ENCODE measurements at regions of chr19 and their contacts with region 1.

Region 1: GRCh38 chr19:48646001-48646721 is at the start of gene CA11:
- DNase-seq: peak; percentile 89 to 95
- H3K4me3 ChIP-seq: peak within 1 kb of the TSS; percentile 68 to 84 (median 82)
- H3K27ac ChIP-seq: peak within 1 kb of the TSS; percentile 78
- H3K4me1 ChIP-seq: peaks cover 0 to 7% (median 1%) of the 10 kb centered on the region in 4 experiments; a peak in 4 of 7 replicates
- H3K27me3 ChIP-seq: no peaks in the 10 kb centered on the region
- CTCF ChIP-seq: peak; percentile 81 to 96 (median 88)
- EP300 ChIP-seq: peak in 1 of 2 experiments; percentile 52; a peak in 1 of 3 replicates
- POLR2A ChIP-seq: 0 out of 3 replicates have a peak, but pooled peaks of 1 of the 2 experiments have one; percentile 22
- RAD21 ChIP-seq: peak; percentile 91 to 96
- total RNA-seq, gene CA11: 51.7 and 53.0 TPM in 2 replicates

Region 2: DNA sequence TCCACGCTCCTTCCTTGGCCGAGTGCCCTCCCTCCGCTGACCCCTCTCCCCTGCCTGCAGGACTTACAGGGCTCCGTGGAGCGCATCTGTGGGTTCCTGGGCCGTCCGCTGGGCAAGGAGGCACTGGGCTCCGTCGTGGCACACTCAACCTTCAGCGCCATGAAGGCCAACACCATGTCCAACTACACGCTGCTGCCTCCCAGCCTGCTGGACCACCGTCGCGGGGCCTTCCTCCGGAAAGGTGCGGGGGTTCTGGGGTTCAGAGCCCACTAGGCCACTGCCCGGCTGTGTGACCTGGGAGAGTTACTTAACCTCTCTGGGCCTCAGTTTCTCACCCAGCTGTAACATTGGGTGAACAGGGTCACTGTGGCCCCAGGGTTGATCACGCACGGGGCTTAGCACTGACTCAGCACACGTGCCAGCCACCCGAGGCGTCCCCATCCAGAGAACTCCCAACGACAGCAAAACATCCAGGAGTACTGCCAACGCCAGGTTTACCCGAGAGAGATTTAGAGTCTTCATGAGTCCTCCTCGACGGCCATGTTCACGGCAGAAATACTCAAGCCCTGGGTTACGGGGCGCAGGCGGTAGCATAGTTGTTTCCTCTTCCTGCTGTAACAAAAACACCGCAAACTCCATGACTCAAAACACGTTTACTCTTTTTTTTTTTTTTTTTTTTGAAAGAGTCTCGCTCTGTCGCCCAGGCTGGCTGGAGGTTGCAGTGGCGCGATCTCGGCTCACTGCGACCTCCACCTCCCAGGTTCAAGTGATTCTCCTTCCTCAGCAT is 49.3 kb before region 1 on chr19:
- CTCF ChIA-PET with region 1: no interaction called
- POLR2A ChIA-PET with region 1: no interaction called
- DNase-seq: no peak
- H3K4me3 ChIP-seq: no peak overlapping the region
- H3K27ac ChIP-seq: no peak overlapping the region
- H3K4me1 ChIP-seq: no peaks in the 10 kb centered on the region
- H3K27me3 ChIP-seq: 0 out of 7 replicates have a peak, but pooled peaks cover 0 to 2% (median 0%) of the 10 kb centered on the region in 4 experiments
- CTCF ChIP-seq: no peak
- EP300 ChIP-seq: no peak
- POLR2A ChIP-seq: no peak
- RAD21 ChIP-seq: no peak

Region 3: DNA sequence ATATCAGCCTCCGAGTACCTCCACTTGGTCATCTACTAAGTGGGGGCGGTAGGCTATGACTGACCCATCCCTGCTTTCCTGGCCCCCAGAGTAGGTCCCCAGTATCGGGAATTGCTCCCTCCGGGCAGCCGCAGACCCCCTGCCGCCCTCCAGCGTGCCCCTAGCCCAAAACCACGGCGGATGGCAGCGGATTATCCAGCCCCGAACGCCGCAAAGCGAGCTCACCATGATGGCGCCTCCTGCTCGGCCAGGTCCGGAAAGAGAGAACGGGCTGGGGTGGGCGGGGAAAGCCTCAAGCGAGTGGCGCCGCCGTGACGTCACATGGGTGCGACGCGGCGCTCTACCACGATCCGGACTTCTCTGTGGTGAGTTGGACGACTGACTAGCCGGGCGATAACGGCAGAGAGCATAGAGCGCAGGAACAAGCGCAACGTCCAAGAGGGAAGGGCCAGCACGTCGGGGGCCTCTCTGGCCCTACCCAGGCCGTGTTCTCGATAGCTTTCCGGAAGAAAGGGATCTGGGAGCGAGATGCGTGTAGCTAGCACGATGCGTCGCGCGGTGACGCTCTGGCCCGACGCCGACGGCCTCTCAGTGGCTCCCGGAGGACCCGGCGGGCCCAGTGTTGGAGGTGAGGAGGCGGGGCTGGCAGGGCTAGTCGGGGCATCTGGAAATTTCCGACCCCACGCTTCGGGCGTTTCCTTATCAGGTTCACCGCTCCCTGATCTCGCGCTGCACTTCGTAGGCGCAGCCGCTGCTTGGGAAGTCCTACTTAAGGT is 27.1 kb before region 1 on chr19 and contains the starts of genes RPL18 and SPHK2:
- CTCF ChIA-PET with region 1: no interaction called
- POLR2A ChIA-PET with region 1: interaction called, 17 read pairs
- DNase-seq: peak; percentile 97 to 98
- H3K4me3 ChIP-seq: peak within 1 kb of the TSS; percentile 83 to 97 (median 94)
- H3K27ac ChIP-seq: peak within 1 kb of the TSS; percentile 87
- H3K4me1 ChIP-seq: peaks cover 3 to 40% (median 32%) of the 10 kb centered on the region in 4 experiments
- H3K27me3 ChIP-seq: no peaks in the 10 kb centered on the region
- CTCF ChIP-seq: peak in 1 of 3 experiments; percentile 9; a peak in 1 of 4 replicates
- EP300 ChIP-seq: no peak; a peak in 1 of 3 replicates
- POLR2A ChIP-seq: peak; percentile 95 to 99
- RAD21 ChIP-seq: no peak
- total RNA-seq, gene RPL18: 1,669 and 1,693 TPM in 2 replicates
- total RNA-seq, gene SPHK2: 60.9 and 61.6 TPM in 2 replicates

Region 4: GRCh38 chr19:48634424-48635197 is 11.6 kb before region 1 on chr19:
- CTCF ChIA-PET with region 1: interaction called, 7 read pairs
- POLR2A ChIA-PET with region 1: interaction called, 28 read pairs
- DNase-seq: peak; percentile 90 to 97
- H3K4me3 ChIP-seq: peak overlapping the region; percentile 22 to 74 (median 47); a peak in 6 of 8 replicates
- H3K27ac ChIP-seq: no peak overlapping the region
- H3K4me1 ChIP-seq: peaks cover 9 to 33% (median 28%) of the 10 kb centered on the region in 4 experiments
- H3K27me3 ChIP-seq: peaks cover 0 to 2% (median 0%) of the 10 kb centered on the region in 4 experiments; a peak in 2 of 7 replicates
- CTCF ChIP-seq: no peak
- EP300 ChIP-seq: no peak
- POLR2A ChIP-seq: peak in 1 of 2 experiments; percentile 69; a peak in 1 of 3 replicates
- RAD21 ChIP-seq: no peak; a peak in 1 of 4 replicates

Region 5: GRCh38 chr19:48698046-48698445 is 51.9 kb after region 1 on chr19:
- CTCF ChIA-PET with region 1: interaction called, 9 read pairs
- POLR2A ChIA-PET with region 1: interaction called, 21 read pairs
- DNase-seq: no peak
- H3K4me3 ChIP-seq: no peak overlapping the region
- H3K27ac ChIP-seq: no peak overlapping the region
- H3K4me1 ChIP-seq: peaks cover 0 to 5% (median 1%) of the 10 kb centered on the region in 4 experiments; a peak in 4 of 7 replicates
- H3K27me3 ChIP-seq: no peaks in the 10 kb centered on the region
- CTCF ChIP-seq: no peak
- EP300 ChIP-seq: no peak
- POLR2A ChIP-seq: no peak
- RAD21 ChIP-seq: no peak

Region 6: GRCh38 chr19:48713864-48714758 is 68.0 kb after region 1 on chr19:
- CTCF ChIA-PET with region 1: interaction called, 12 read pairs
- POLR2A ChIA-PET with region 1: interaction called, 17 read pairs
- DNase-seq: peak; percentile 98 to 99
- H3K4me3 ChIP-seq: peak overlapping the region; percentile 76 to 86 (median 82)
- H3K27ac ChIP-seq: peak overlapping the region; percentile 70; the same call in 1 of the 2 replicates
- H3K4me1 ChIP-seq: peaks cover 0 to 27% (median 7%) of the 10 kb centered on the region in 4 experiments; a peak in 6 of 7 replicates
- H3K27me3 ChIP-seq: no peaks in the 10 kb centered on the region
- CTCF ChIP-seq: no peak
- EP300 ChIP-seq: no peak
- POLR2A ChIP-seq: no peak
- RAD21 ChIP-seq: no peak

Region 7: DNA sequence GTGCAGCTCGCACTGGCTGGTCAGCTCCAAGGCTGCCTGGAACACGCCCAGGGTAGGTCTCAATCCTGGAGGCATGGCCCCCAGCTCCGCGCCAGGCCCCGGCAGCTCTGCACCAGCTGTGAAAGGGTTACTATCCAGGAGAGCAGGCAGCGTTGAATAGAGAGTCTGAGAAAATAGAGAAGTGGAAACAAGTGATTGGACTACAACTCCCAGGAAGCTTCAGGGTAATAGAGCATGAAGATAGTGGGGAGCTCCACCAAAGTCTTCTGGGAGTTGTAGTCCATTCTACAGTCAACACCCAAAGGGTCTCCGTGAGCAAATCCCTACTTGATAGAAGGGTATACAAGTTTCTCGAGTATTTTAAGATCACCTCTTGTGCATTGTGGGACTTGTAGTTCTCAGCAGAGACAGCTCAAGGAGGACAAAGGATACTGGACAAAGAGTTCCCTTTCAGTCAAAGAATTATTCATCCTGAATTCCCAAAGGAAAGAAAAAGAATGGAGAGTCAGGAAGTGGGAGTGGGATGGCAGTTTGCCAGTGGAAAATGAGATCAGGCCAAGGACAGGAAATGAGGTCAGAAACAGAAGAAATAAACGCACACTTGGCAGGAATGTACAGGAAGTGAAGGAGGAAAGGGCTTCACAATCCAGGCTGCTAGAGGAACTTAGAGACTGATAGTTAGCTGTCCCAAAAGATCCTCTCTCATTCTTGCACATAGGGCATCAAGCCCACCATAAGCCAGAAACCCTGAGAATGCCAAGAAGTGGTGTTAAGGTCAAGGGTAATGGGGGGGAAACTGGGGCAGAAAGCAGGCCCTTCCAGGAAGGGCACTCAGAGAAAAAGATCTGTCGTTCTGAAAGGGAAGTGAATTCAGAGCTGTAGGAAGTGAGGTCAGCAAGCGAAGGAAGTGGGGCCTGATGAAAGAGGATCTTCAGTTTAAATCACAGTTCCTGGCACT is 78.9 kb after region 1 on chr19:
- CTCF ChIA-PET with region 1: interaction called, 10 read pairs
- POLR2A ChIA-PET with region 1: interaction called, 6 read pairs
- DNase-seq: no peak
- H3K4me3 ChIP-seq: no peak overlapping the region
- H3K27ac ChIP-seq: no peak overlapping the region
- H3K4me1 ChIP-seq: peaks cover 0 to 11% (median under 1%) of the 10 kb centered on the region in 4 experiments; a peak in 4 of 7 replicates
- H3K27me3 ChIP-seq: no peaks in the 10 kb centered on the region
- CTCF ChIP-seq: no peak
- EP300 ChIP-seq: no peak
- POLR2A ChIP-seq: no peak
- RAD21 ChIP-seq: no peak

Region 8: GRCh38 chr19:48738557-48739399 is 92.6 kb after region 1 on chr19:
- CTCF ChIA-PET with region 1: interaction called, 10 read pairs
- POLR2A ChIA-PET with region 1: interaction called, 16 read pairs
- DNase-seq: peak; percentile 89 to 99
- H3K4me3 ChIP-seq: peak overlapping the region; percentile 38 to 75 (median 52)
- H3K27ac ChIP-seq: no peak overlapping the region
- H3K4me1 ChIP-seq: peaks cover 5 to 26% (median 22%) of the 10 kb centered on the region in 4 experiments
- H3K27me3 ChIP-seq: peaks cover 3 to 19% (median 12%) of the 10 kb centered on the region in 4 experiments; a peak in 6 of 7 replicates
- CTCF ChIP-seq: peak; percentile 48 to 86 (median 56)
- EP300 ChIP-seq: no peak
- POLR2A ChIP-seq: no peak
- RAD21 ChIP-seq: peak; percentile 27 to 65

Measured in H1 (cell line).